ENCODE measurements at regions of chr12 and their contacts with region 1.

Region 1: DNA sequence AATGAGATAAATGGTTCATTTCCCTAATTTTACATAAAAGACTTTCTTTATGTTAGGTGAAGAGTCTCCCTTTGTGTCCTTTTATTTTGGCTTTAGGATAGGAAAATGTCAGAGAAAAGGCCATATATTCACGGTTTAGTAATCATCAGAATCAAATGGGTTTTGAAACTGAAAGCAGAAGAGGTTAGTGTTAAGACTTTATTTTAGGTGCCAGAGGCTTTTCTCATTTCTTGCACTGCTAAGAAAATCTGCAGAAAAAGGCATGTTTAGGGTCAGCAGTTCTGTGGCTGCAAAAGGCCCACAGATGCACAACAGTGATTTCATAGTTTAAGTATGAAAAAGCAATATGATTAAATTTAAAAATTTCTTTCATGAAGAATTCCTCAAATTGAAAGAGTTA is 80.4 kb upstream of the SINHCAF start:
- DNase-seq: no peak
- H3K4me3 ChIP-seq: no peak overlapping the region
- H3K27ac ChIP-seq: no peak overlapping the region
- H3K4me1 ChIP-seq: no peaks in the 10 kb centered on the region
- H3K27me3 ChIP-seq: no peaks in the 10 kb centered on the region
- CTCF ChIP-seq: no peak
- POLR2A ChIP-seq: no peak

Region 2: GRCh38 chr12:31391001-31391400 is 15.3 kb before region 1 on chr12:
- CTCF ChIA-PET with region 1: interaction called, 14 read pairs
- POLR2A ChIA-PET with region 1: no interaction called
- dilution Hi-C with region 1: no loop called
- intact Hi-C with region 1: no loop called
- DNase-seq: no peak
- H3K4me3 ChIP-seq: no peak overlapping the region
- H3K27ac ChIP-seq: no peak overlapping the region
- H3K4me1 ChIP-seq: no peaks in the 10 kb centered on the region
- H3K27me3 ChIP-seq: no peaks in the 10 kb centered on the region
- CTCF ChIP-seq: no peak
- POLR2A ChIP-seq: no peak

Region 3: GRCh38 chr12:31589904-31590641 is 183.7 kb after region 1 on chr12:
- CTCF ChIA-PET with region 1: interaction called, 21 read pairs
- POLR2A ChIA-PET with region 1: no interaction called
- dilution Hi-C with region 1: no loop called
- intact Hi-C with region 1: loop called (anchors 1 kb)
- DNase-seq: peak; percentile 67
- H3K4me3 ChIP-seq: peak overlapping the region; percentile 56 to 99 (median 63)
- H3K27ac ChIP-seq: peak overlapping the region; percentile 90
- H3K4me1 ChIP-seq: peaks cover 17% of the 10 kb centered on the region
- H3K27me3 ChIP-seq: peaks cover 0 to 2% of the 10 kb centered on the region in 2 experiments
- CTCF ChIP-seq: peak in 1 of 2 donors; percentile 23
- POLR2A ChIP-seq: no peak

Region 4: DNA sequence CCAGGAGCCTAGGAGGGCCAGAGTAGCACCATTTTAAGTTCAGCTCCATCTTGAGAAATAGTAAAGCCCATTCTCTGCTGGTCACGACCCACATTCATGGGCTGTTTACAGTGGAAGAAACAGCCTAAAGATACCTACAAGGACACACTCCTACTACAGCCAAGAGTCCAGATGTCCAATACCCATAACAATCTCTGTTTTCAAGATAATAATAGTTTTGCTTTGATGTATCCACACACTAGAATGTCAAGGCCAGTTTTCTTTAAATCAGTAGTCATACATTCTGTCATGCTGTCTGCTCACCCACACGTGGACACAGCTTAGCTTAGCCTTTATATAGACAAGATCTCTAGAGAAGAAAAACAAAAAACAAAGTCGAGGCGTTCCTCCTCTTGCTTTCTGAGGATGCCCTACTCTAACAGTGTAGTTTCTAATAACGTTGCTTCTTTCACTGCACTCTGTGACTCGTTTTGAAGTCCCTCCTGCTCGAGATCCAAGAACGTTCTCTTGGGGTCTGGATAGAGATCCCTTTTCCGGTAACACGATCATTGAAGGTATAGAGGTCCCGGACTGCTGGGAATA is 235.3 kb after region 1 on chr12:
- CTCF ChIA-PET with region 1: interaction called, 140 read pairs
- POLR2A ChIA-PET with region 1: no interaction called
- dilution Hi-C with region 1: no loop called
- intact Hi-C with region 1: loop called (anchors 1 kb)
- DNase-seq: no peak
- H3K4me3 ChIP-seq: no peak overlapping the region
- H3K27ac ChIP-seq: no peak overlapping the region
- H3K4me1 ChIP-seq: no peaks in the 10 kb centered on the region
- H3K27me3 ChIP-seq: peaks cover 0 to 2% of the 10 kb centered on the region in 2 experiments
- CTCF ChIP-seq: no peak
- POLR2A ChIP-seq: no peak

Region 5: DNA sequence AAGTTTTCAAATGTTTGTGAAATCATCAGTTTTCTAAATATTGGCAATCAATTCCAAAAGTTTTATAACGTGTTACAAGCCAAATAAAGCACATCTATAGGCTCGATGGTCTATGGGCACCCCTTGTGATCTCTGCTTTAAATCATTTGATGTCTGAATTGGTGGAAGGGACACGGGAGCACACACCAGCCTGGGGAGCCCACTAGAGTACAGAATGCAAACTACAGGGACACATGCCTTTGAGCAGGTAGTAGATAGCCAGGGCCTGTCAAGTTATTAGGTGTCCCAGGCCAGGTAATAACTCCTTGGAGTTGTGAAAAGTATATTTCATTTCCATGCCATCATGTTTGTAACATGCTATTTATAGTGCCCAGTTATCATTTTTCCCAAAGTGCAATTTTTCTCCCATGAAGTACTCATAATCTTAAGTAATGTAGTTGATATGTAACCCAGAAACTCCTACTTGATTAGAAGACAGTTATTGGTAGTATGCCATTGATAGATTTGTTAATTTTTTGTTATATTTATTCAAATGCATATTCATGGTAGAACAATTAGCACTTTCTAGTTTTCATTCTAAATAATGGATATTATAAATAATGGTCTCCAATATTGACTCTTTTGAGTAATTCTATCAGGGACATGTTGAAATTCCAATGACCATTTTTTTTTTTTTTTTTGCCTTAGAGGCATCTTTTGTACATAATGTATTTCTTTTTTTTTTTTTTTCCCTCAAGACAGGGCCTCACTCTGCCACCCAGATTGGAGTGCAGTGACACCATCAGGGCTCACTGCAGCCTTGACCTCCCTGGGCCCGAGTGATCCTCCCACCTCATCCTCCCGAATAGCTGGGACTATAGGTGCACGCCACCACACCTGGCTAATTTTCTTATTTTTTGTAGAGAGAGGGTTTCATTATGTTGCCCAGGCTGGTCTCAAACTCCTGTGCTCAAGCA is 896.2 kb after region 1 on chr12:
- CTCF ChIA-PET with region 1: no interaction called
- POLR2A ChIA-PET with region 1: no interaction called
- dilution Hi-C with region 1: no loop called
- intact Hi-C with region 1: loop called (anchors 5 kb)
- DNase-seq: peak; percentile 56
- H3K4me3 ChIP-seq: no peak overlapping the region
- H3K27ac ChIP-seq: no peak overlapping the region
- H3K4me1 ChIP-seq: no peaks in the 10 kb centered on the region
- H3K27me3 ChIP-seq: no peaks in the 10 kb centered on the region
- CTCF ChIP-seq: peak; percentile 58 to 61
- POLR2A ChIP-seq: no peak

Measured in endothelial cell of umbilical vein (primary cell).